Common myeloid progenitor, CD34-positive (primary cell): ENCODE measurements at regions of chr9 and their contacts with region 1.

Region 1: DNA sequence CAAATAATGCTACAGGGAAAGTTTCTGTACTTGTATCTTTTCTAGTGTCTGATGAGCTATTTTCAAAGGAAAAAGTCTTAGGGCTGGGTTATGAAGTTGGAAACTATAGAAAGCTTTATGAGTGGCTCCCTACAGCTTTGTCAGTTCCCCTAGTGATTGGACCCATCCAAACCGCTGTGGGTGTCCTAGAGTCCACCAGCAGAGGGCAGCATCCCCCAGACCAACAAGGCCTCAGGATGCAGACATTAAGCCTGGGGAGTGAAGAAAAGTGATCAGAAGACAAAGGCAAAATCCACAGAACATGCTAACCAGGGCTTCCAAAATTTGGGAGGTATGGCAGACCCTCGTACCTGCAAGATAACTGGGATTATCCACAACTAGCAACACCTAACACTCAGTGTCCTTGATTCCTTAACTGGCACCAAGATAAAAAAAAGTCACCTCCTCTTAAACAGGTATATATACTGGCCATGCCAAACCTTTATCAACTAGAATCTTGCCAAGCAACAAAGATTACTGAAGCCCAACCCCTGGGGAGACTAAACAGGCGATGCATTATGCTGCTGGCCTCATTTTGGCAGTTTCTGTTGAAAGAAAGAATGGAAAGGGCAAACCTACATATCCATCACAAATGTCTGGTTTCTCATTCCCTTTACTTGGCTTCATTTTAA is 110.4 kb upstream of the NR5A1 start:
- DNase-seq: peak; percentile 78 to 90 (median 84)
- H3K4me3 ChIP-seq: no peak overlapping the region
- H3K27ac ChIP-seq: no peak overlapping the region
- H3K4me1 ChIP-seq: peaks cover 0 to 21% (median 15%) of the 10 kb centered on the region in 4 experiments
- H3K27me3 ChIP-seq: no peaks in the 10 kb centered on the region

Region 2: DNA sequence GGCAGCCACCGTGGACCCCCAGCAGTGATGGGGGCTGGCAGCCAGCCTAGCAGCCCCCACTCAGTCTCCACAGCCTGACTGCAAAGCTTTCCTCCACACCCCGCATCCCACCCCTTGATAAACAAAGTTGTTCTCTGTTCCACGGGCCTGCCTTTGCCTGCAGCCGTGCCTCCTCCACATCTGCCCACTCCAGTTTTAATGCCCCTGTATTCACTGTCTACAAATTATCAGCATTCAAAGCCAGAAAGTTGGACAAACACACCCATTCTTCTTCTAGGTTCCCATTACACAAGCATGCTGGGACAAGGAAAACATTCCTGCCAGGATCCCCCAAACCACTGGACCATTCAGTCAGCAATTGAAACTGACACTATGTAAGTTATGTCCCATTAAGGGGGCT is 87.4 kb before region 1 on chr9:
- CTCF ChIA-PET with region 1: no interaction called
- POLR2A ChIA-PET with region 1: no interaction called
- DNase-seq: no peak
- H3K4me3 ChIP-seq: no peak overlapping the region
- H3K27ac ChIP-seq: no peak overlapping the region
- H3K4me1 ChIP-seq: no peaks in the 10 kb centered on the region
- H3K27me3 ChIP-seq: no peaks in the 10 kb centered on the region

Region 3: DNA sequence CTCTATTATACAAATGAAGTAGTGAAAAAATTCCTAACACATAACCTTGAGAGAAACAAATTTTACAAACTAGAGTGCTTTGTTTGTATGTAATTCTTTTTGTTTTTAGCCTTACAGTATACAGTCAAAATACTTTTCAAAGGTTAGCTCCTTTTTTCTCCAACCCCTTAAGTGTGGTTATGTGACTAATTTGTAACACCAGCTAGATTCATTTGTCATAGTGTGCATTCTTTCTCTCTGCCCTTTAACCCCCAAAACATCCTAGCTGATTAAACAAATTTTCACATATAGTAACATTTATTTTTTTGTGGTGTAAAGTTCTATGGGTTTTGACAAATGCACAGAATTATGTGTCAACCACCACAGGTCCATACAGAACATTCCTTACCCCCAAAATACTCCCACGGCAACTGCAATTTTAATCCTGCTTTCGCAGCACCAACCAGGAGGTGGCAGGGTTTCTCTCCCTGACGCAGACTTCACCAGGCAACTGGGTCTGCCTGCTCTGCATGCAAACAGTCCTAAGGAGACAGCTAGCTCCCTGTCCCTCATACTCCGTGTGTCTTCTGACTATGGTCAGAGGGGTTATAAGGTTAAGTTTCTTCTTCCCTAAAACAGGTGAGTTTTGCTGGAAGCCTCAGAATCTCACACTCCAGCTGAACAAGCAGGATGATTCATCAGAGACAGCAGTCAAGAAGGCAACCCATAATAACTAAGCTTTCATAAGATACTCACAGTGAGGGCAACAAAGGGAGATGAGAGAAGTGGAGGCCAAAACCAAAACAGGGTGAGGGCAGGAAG is 65.9 kb before region 1 on chr9:
- CTCF ChIA-PET with region 1: interaction called, 44 read pairs
- POLR2A ChIA-PET with region 1: no interaction called
- DNase-seq: peak; percentile 52 to 71 (median 69)
- H3K4me3 ChIP-seq: no peak overlapping the region
- H3K27ac ChIP-seq: no peak overlapping the region
- H3K4me1 ChIP-seq: peaks cover 11 to 42% (median 28%) of the 10 kb centered on the region in 4 experiments
- H3K27me3 ChIP-seq: no peaks in the 10 kb centered on the region

Region 4: DNA sequence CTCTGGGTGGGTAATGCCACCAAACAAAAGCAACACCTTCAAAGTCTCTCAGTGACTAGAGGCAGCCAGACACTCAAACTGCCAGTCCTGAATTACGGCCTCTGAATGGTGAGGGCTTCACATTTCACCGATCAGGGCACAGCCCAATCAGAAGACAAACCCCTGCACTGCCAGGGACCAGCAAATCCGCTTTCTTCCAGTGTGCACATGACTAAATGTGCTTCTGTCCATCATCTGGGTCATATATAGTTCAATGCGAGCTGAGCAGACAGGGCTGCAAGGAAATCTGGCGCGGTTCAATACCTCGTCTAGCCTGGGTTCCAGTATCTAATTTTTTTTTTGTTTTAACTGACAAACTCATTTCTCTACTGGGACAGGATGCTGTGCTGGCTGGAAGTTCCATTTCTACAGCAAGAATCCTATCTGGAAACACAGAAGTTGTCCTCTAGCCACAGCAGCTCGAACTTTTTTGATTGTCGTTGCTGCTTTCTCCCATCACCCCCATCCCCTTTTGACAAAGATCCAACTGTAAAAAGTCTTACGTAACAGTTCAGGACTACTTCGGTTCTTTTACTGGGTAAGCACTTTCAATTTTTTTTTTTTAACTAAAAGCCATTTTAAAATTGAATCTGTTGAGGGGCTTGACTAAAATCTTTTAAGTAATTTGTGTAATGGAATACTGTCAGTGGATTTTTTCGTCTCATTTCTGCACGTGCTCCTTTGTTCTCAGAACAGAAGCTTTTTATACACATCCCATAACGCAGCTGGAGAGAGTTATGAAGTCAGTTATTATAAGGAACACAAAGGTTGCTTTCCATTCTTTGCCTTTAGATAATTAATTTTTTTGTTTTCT is 40.8 kb after region 1 on chr9:
- CTCF ChIA-PET with region 1: interaction called, 14 read pairs
- POLR2A ChIA-PET with region 1: no interaction called
- DNase-seq: peak; percentile 92 to 97 (median 95)
- H3K4me3 ChIP-seq: peak overlapping the region in 6 of 7 experiments; percentile 78 to 95 (median 90)
- H3K27ac ChIP-seq: peak overlapping the region; percentile 89 to 95
- H3K4me1 ChIP-seq: peaks cover 12 to 56% (median 35%) of the 10 kb centered on the region in 4 experiments
- H3K27me3 ChIP-seq: no peaks in the 10 kb centered on the region

Region 5: DNA sequence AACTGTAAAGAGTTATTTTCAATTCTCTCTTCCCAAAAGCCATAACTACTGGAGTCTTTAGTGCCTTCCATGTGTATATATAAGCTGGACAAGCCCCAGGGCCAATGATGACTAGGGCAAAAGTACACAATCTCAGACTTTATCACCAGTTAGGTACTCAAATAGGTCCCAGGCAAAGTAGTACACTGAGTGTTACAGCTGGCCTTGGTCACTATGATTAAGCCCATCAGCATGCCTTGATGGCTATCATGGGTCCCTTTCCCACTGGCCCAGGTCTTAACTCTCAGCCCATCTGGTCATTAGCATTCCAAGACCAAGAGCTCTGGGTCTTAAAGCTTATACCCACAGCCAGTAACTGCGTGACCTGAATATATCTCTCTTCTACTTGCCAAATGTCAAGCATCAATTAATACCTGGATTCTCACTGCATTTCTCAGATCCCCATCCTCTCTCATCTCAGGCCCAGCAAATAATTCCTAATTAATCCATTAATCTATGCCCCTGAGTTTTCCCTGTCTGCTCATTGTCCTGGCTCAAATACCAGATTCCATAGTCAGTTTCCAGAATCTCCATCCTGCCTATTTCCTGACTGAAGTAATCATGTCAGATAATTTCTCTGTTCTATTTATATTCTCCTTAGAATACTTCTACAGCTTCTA is 91.2 kb after region 1 on chr9:
- CTCF ChIA-PET with region 1: interaction called, 155 read pairs
- POLR2A ChIA-PET with region 1: no interaction called
- DNase-seq: no peak
- H3K4me3 ChIP-seq: no peak overlapping the region
- H3K27ac ChIP-seq: no peak overlapping the region
- H3K4me1 ChIP-seq: peaks cover 0 to 6% (median 0%) of the 10 kb centered on the region in 4 experiments
- H3K27me3 ChIP-seq: no peaks in the 10 kb centered on the region

Region 6: DNA sequence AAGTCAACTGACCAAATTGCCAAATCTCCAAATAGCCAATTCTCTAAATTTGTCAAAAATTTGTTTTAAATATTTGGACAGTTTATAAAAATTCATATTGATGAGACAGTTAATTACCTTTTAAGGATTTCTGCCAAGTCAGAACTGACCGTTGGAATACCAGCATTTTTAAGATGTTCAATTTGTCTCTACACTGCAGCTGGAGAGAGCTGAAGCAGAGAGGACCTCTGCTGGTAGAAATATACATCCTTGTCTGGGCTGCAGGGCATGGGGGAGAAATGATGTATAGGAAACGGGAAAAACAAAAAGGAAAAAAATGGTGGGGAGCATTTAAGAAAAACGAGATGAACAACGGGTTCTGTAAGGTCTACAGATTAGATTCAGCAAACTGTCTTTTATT is 136.7 kb after region 1 on chr9:
- CTCF ChIA-PET with region 1: interaction called, 11 read pairs
- POLR2A ChIA-PET with region 1: no interaction called
- DNase-seq: no peak
- H3K4me3 ChIP-seq: no peak overlapping the region
- H3K27ac ChIP-seq: no peak overlapping the region
- H3K4me1 ChIP-seq: peaks cover 22 to 44% (median 34%) of the 10 kb centered on the region in 4 experiments
- H3K27me3 ChIP-seq: no peaks in the 10 kb centered on the region

Region 7: GRCh38 chr9:124852829-124853531 is 235.4 kb after region 1 on chr9 and contains the start of gene WDR38:
- CTCF ChIA-PET with region 1: interaction called, 11 read pairs
- POLR2A ChIA-PET with region 1: no interaction called
- DNase-seq: peak; percentile 66 to 86 (median 85)
- H3K4me3 ChIP-seq: peak within 1 kb of the TSS; percentile 16 to 75 (median 51)
- H3K27ac ChIP-seq: no peak within 1 kb of the TSS
- H3K4me1 ChIP-seq: peaks cover 0 to 21% (median 17%) of the 10 kb centered on the region in 4 experiments
- H3K27me3 ChIP-seq: no peaks in the 10 kb centered on the region

Region 8: GRCh38 chr9:124880501-124880900 is 262.9 kb after region 1 on chr9:
- CTCF ChIA-PET with region 1: no interaction called
- POLR2A ChIA-PET with region 1: no interaction called
- DNase-seq: no peak
- H3K4me3 ChIP-seq: no peak overlapping the region
- H3K27ac ChIP-seq: no peak overlapping the region
- H3K4me1 ChIP-seq: no peaks in the 10 kb centered on the region
- H3K27me3 ChIP-seq: no peaks in the 10 kb centered on the region